Heart left ventricle (tissue), 16 donors: ENCODE measurements at regions of chr2 and their contacts with region 1.

Region 1: GRCh38 chr2:17058772-17059402 is 393.3 kb upstream of the CYRIA start:
- DNase-seq: no peak
- ATAC-seq: no peak
- H3K4me3 ChIP-seq: no peak overlapping the region
- H3K27ac ChIP-seq: no peak overlapping the region
- H3K4me1 ChIP-seq: peaks cover 0 to 2% (median 0%) of the 10 kb centered on the region in 12 donors
- H3K27me3 ChIP-seq: no peaks in the 10 kb centered on the region
- CTCF ChIP-seq: no peak
- POLR2A ChIP-seq: no peak

Region 2: DNA sequence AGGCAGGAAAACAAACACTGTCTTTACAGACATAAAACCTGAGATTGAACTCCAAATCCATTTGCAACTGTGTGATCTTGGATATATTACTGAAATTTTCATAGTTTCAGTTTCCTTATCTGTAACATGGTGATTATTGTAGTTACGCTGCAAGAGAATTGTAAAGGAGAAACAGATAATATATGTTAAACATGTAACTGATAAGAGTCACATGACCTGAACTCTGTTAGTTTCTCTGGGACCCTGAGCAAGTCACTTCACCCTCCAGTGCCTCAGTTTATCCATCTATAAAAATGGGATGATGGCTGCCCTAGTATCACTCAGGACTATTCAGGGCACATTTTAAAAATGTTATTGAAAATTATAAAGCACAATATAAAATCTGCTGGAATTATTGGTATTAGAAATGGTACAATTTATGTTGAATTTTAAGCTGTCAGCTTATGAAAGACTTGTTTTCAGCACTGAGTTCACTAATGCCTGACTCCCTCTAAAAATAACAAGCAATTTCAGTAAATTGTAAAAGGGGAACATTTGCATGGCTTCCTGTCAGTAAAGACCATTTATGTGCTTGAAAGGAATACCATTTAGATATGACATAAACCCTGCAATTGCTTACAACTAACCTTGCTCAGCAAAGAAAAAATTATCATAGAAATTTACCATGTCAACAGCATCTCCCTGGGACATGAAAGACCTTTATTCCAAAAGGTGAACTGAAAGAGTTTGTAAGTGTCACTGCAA is 65.9 kb after region 1 on chr2:
- intact Hi-C with region 1: loop called in 1 of 10 experiments (anchors 5 kb)
- DNase-seq: no peak
- ATAC-seq: no peak
- H3K4me3 ChIP-seq: no peak overlapping the region
- H3K27ac ChIP-seq: no peak overlapping the region
- H3K4me1 ChIP-seq: no peaks in the 10 kb centered on the region
- H3K27me3 ChIP-seq: peaks cover 0 to 8% (median 0%) of the 10 kb centered on the region in 9 donors
- CTCF ChIP-seq: no peak
- POLR2A ChIP-seq: no peak